Posterior vena cava (tissue), 2 donors: ENCODE measurements at regions of chr12 and their contacts with region 1.

Region 1: GRCh38 chr12:83920821-83921547 is 991.6 kb downstream of the SLC6A15 start:
- DNase-seq: no peak

Region 2: DNA sequence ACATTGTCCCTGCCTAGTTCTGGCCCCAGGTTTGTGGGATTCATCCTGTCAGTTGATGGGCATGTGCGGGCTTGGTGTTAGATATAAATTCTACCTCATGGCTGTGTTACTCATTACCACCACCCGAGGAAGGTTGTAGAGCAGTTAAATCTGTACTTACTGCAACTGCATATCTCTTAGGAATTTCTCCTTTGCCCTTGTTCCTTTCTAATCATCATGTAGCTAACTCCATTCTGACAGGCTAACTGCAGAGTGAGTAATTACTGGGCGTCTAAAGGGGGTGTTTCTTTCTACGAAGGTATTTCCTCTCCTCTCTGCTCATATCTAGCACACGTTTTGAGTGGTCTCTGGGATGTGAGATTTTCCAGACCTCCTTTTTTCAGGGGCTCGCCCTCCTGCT is 157.6 kb before region 1 on chr12:
- intact Hi-C with region 1: no loop called
- DNase-seq: no peak

Region 3: GRCh38 chr12:84627593-84627992 is 706.6 kb after region 1 on chr12:
- intact Hi-C with region 1: loop called in 1 of 2 experiments (anchors 5 kb)
- DNase-seq: no peak